B cell (primary cell): ENCODE measurements at regions of chr12 and their contacts with region 1.

Region 1: GRCh38 chr12:91811481-91812287 is 334.0 kb downstream of the BTG1 start:
- DNase-seq: peak; percentile 80
- ATAC-seq: peak; percentile 71
- H3K4me3 ChIP-seq: no peak overlapping the region
- H3K4me3 Mint-ChIP-seq: no peak overlapping the region
- H3K27ac ChIP-seq: no peak overlapping the region
- H3K27ac Mint-ChIP-seq: peak overlapping the region; percentile 43
- H3K4me1 ChIP-seq: peaks cover 0 to 5% of the 10 kb centered on the region in 2 donors
- H3K4me1 Mint-ChIP-seq: peaks cover 4% of the 10 kb centered on the region
- H3K27me3 ChIP-seq: no peaks in the 10 kb centered on the region
- H3K27me3 Mint-ChIP-seq: no peaks in the 10 kb centered on the region
- CTCF ChIP-seq: peak; percentile 90

Region 2: DNA sequence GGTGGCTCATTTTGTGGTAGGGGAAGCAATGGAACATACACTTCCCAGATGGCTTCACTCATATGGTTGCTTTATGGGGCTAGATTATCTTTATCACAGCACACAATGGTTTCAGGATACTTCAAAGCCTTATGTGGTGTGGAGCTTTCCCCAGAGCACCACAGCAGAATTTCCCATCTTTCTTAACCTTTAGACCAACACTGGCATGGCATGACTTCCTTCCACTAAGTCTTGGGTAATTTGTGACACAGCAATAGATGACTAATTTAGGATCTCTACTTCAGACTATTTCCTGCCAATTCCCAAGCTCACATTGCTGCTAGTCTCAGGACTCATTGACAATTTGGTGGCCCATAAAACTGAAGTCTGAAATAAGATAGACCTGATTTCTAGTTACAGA is 592.2 kb before region 1 on chr12:
- CTCF ChIA-PET with region 1: no interaction called
- POLR2A ChIA-PET with region 1: no interaction called
- intact Hi-C with region 1: no loop called
- DNase-seq: no peak
- ATAC-seq: no peak
- H3K4me3 ChIP-seq: no peak overlapping the region
- H3K4me3 Mint-ChIP-seq: no peak overlapping the region
- H3K27ac ChIP-seq: no peak overlapping the region
- H3K27ac Mint-ChIP-seq: no peak overlapping the region
- H3K4me1 ChIP-seq: no peaks in the 10 kb centered on the region
- H3K4me1 Mint-ChIP-seq: no peaks in the 10 kb centered on the region
- H3K27me3 ChIP-seq: no peaks in the 10 kb centered on the region
- H3K27me3 Mint-ChIP-seq: no peaks in the 10 kb centered on the region
- CTCF ChIP-seq: no peak

Region 3: GRCh38 chr12:91778938-91779400 is 32.7 kb before region 1 on chr12:
- CTCF ChIA-PET with region 1: interaction called, 21 read pairs
- POLR2A ChIA-PET with region 1: no interaction called
- intact Hi-C with region 1: no loop called
- DNase-seq: peak; percentile 41
- ATAC-seq: peak; percentile 69
- H3K4me3 ChIP-seq: peak overlapping the region in 1 of 5 experiments; percentile 16
- H3K4me3 Mint-ChIP-seq: peak overlapping the region; percentile 75
- H3K27ac ChIP-seq: peak overlapping the region; percentile 63 to 83
- H3K27ac Mint-ChIP-seq: peak overlapping the region; percentile 82
- H3K4me1 ChIP-seq: peaks cover 22 to 23% of the 10 kb centered on the region in 2 donors
- H3K4me1 Mint-ChIP-seq: peaks cover 20% of the 10 kb centered on the region
- H3K27me3 ChIP-seq: no peaks in the 10 kb centered on the region
- H3K27me3 Mint-ChIP-seq: peaks cover 8% of the 10 kb centered on the region
- CTCF ChIP-seq: no peak

Region 4: GRCh38 chr12:91825999-91826398 is 14.3 kb after region 1 on chr12:
- CTCF ChIA-PET with region 1: interaction called, 30 read pairs
- POLR2A ChIA-PET with region 1: no interaction called
- intact Hi-C with region 1: no loop called
- DNase-seq: no peak
- ATAC-seq: no peak
- H3K4me3 ChIP-seq: no peak overlapping the region
- H3K4me3 Mint-ChIP-seq: no peak overlapping the region
- H3K27ac ChIP-seq: no peak overlapping the region
- H3K27ac Mint-ChIP-seq: no peak overlapping the region
- H3K4me1 ChIP-seq: no peaks in the 10 kb centered on the region
- H3K4me1 Mint-ChIP-seq: no peaks in the 10 kb centered on the region
- H3K27me3 ChIP-seq: no peaks in the 10 kb centered on the region
- H3K27me3 Mint-ChIP-seq: peaks cover 3% of the 10 kb centered on the region
- CTCF ChIP-seq: no peak

Region 5: DNA sequence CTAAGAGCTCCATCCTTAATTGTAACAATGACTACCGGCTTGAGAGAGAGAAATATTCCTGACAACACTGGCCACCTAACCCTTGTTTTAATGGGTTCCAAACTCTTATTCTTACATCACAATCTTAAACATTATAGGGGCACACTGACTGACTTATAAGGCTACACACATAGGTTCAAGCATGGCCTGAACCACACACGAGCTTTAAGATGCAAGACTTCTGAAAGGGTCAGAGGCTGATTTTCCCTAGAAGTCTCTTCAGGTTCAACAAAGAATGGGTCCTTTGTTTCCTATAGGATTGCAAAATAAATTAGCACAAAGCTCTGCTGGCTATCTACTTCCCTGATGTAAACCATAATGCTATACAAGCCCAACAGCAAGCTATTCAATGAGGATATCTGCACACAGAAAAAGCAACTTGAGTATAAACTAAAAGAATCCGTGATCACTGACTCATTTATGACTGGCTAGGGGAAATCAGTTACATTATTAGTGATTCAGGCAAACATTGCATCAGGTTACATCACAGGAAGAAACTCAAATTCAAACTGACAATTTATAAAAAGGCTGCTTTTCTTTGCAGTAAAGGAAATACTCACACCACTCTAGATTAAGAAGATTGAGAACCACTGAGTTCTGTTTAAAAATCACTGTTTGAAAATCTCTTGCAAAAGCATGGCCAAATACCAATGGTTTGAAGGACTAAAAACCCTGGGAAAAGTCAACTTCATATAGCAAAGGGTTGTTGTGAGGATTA is 325.5 kb after region 1 on chr12:
- CTCF ChIA-PET with region 1: interaction called, 16 read pairs
- POLR2A ChIA-PET with region 1: no interaction called
- intact Hi-C with region 1: loop called (anchors 2 kb)
- DNase-seq: no peak
- ATAC-seq: no peak
- H3K4me3 ChIP-seq: peak overlapping the region; percentile 28 to 100 (median 96)
- H3K4me3 Mint-ChIP-seq: peak overlapping the region; percentile 98
- H3K27ac ChIP-seq: peak overlapping the region in 1 of 2 donors; percentile 13
- H3K27ac Mint-ChIP-seq: peak overlapping the region; percentile 23
- H3K4me1 ChIP-seq: peaks cover 71 to 80% of the 10 kb centered on the region in 2 donors
- H3K4me1 Mint-ChIP-seq: peaks cover 74% of the 10 kb centered on the region
- H3K27me3 ChIP-seq: no peaks in the 10 kb centered on the region
- H3K27me3 Mint-ChIP-seq: no peaks in the 10 kb centered on the region
- CTCF ChIP-seq: no peak

Region 6: GRCh38 chr12:92224685-92225331 is 413.1 kb after region 1 on chr12:
- CTCF ChIA-PET with region 1: no interaction called
- POLR2A ChIA-PET with region 1: no interaction called
- intact Hi-C with region 1: no loop called
- DNase-seq: no peak
- ATAC-seq: no peak
- H3K4me3 ChIP-seq: no peak overlapping the region
- H3K4me3 Mint-ChIP-seq: no peak overlapping the region
- H3K27ac ChIP-seq: no peak overlapping the region
- H3K27ac Mint-ChIP-seq: no peak overlapping the region
- H3K4me1 ChIP-seq: no peaks in the 10 kb centered on the region
- H3K4me1 Mint-ChIP-seq: no peaks in the 10 kb centered on the region
- H3K27me3 ChIP-seq: no peaks in the 10 kb centered on the region
- H3K27me3 Mint-ChIP-seq: no peaks in the 10 kb centered on the region
- CTCF ChIP-seq: no peak

Region 7: DNA sequence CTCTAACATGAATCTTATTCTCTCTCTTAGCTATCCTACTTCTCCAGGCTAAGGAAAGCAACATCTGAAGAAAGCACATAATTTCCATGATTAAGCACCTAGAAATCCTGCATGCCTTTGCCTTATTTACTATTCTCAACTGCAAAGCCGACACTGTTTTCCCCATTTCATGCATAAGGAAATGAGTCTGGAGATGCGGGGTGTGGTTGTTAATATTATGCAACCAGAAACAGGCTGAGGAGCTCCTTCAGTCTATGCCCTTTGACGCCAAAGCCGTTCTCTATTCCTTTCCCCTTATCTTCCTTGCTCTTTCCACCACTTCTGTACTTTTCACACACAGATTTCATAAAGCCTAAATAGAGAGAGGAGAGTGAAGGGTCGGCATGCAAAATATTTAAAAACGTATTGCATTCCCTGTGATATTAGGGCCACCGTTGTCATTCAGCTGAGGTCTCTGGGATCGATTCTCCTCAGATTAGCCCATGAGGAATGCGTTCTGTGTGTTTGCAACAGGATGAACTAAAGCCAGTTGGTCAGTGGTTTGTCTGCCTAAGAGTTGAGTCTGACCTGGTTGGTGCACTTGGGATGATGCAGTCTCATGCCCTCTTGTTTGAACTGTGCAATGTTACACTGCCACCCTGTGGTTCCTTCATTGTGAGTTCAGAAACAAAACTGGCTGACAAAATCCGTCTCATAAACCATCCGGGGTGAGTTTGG is 838.0 kb after region 1 on chr12:
- CTCF ChIA-PET with region 1: interaction called, 8 read pairs
- POLR2A ChIA-PET with region 1: no interaction called
- intact Hi-C with region 1: loop called (anchors 1 kb)
- DNase-seq: peak; percentile 76
- ATAC-seq: peak; percentile 89
- H3K4me3 ChIP-seq: no peak overlapping the region
- H3K4me3 Mint-ChIP-seq: no peak overlapping the region
- H3K27ac ChIP-seq: no peak overlapping the region
- H3K27ac Mint-ChIP-seq: no peak overlapping the region
- H3K4me1 ChIP-seq: no peaks in the 10 kb centered on the region
- H3K4me1 Mint-ChIP-seq: peaks cover 3% of the 10 kb centered on the region
- H3K27me3 ChIP-seq: no peaks in the 10 kb centered on the region
- H3K27me3 Mint-ChIP-seq: peaks cover 9% of the 10 kb centered on the region
- CTCF ChIP-seq: peak; percentile 82

Region 8: DNA sequence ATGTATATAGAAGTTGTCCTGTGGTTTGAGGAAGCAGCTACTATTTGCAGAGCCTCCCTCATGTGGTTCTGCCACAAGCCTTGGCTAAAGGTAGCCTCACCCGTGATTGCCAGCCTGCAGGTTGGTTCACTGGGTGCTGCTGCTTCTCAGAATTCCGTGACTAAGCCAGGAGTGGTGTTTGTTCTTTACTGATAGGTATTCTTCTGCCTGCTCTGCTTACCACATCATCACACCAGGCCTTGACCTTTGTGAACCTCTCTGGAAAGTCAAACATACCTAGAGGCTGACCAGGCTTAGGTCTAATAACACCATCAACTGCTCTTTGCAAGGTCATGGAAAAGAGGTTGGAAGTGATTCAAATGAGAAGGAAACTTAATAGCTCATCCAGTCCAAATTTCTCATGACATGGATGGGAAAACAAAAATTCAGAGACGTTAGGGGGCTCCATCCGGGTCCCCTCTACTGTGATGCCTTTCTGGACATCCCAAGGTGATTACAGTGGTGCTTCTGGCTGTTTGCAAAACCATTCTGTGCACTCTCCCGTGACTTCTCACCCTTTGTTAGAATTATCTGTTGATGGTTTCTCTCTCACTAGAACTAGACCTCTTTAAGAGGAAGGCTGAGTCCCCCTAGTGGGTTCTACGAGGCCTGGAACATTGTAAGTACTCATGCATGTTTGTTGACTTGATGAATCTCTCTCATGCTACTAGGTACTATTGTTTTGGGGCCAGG is 1752.3 kb after region 1 on chr12:
- CTCF ChIA-PET with region 1: no interaction called
- POLR2A ChIA-PET with region 1: no interaction called
- intact Hi-C with region 1: no loop called
- DNase-seq: no peak
- ATAC-seq: no peak
- H3K4me3 ChIP-seq: no peak overlapping the region
- H3K4me3 Mint-ChIP-seq: no peak overlapping the region
- H3K27ac ChIP-seq: no peak overlapping the region
- H3K27ac Mint-ChIP-seq: no peak overlapping the region
- H3K4me1 ChIP-seq: no peaks in the 10 kb centered on the region
- H3K4me1 Mint-ChIP-seq: no peaks in the 10 kb centered on the region
- H3K27me3 ChIP-seq: no peaks in the 10 kb centered on the region
- H3K27me3 Mint-ChIP-seq: peaks cover 19% of the 10 kb centered on the region
- CTCF ChIP-seq: no peak